AG04449 (cell line): ENCODE measurements at regions of chr2 and their contacts with region 1.

Region 1: GRCh38 chr2:68943581-68944568 is 8.8 kb downstream of the GKN2 start:
- DNase-seq: no peak
- H3K4me3 ChIP-seq: no peak overlapping the region
- CTCF ChIP-seq: peak; percentile 66

Region 2: GRCh38 chr2:68909793-68910674 is 33.8 kb before region 1 on chr2:
- CTCF ChIA-PET with region 1: no interaction called
- POLR2A ChIA-PET with region 1: no interaction called
- DNase-seq: no peak
- H3K4me3 ChIP-seq: no peak overlapping the region
- CTCF ChIP-seq: peak; percentile 80

Region 3: DNA sequence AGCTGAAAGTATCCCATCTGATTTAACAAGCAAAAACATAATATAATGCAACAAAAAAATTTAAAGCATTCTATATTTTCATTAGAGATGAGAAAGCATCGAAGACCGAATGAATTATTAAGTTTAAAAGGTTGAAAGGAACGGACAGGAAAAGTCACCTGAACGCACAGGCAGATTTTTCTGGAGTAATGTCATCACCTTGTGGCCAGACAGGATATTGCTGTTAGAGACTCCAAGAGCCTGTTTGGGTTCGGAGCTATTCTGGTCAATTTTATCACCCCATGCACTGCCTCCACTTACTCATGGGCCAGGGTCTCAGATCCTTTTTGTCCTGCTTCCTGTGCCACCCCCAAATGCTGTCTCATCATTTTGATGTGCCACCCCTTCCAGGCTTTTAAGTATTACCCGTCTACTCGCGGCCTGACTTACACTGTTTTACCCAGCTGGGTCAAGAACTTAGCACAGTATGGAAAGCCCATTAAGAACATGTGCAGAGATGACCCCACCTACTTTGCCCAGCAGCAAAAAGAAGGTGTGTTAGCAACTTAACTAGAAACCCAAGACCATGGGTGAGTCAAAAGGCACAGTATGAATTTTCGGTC is 18.5 kb before region 1 on chr2:
- CTCF ChIA-PET with region 1: interaction called, 27 read pairs
- POLR2A ChIA-PET with region 1: no interaction called
- DNase-seq: no peak
- H3K4me3 ChIP-seq: no peak overlapping the region
- CTCF ChIP-seq: peak; percentile 72

Region 4: DNA sequence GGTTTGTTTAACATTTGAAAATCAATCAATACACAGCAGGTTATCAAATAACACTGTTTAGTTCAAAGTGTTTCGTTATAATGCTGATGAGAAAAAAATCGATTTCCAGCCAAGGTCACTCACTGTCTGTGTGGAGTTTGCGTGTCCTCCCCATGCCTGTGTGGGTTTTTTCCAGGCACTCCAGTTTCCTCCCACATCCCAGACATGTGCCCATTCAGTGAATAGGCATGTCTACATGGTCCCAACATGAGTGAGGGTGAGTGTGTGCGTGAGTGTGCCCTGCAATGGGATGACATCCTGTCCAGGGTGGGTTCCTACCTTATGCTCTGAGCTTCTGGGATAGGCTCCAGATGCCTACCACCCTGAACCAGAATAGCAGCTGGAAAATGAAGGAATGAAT is 17.5 kb after region 1 on chr2:
- CTCF ChIA-PET with region 1: interaction called, 31 read pairs
- POLR2A ChIA-PET with region 1: no interaction called
- DNase-seq: no peak
- H3K4me3 ChIP-seq: no peak overlapping the region
- CTCF ChIP-seq: no peak

Region 5: DNA sequence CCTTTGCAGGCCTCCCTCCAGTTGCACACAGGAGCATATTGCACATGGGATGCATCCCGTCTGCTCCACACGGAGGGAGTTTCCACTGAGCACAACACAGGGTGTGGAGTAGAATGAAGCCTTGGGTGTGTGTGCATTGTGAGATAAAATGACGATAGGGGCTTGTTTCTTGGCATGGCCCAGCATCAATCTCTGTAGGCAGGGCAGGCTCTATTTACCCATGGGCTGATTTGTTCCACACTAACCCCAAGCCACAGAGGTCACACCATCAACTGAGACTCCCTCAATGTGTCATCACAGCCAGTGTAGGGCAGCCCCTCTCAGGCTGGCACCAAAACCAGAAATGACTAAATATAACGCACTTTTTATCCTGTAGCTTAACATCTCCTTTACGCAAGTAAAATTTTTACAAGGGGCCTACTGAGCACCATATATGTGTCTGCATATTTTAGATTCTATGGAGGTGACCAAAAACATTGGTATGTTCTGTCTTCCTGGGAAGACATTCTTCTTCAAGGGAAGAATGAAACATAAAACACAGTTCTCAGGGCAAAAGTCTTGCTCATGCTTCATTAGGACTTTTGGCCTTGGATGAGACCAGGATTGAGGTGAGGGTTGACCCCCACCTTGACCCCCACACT is 27.8 kb after region 1 on chr2:
- CTCF ChIA-PET with region 1: interaction called, 19 read pairs
- POLR2A ChIA-PET with region 1: no interaction called
- DNase-seq: peak; percentile 99
- H3K4me3 ChIP-seq: no peak overlapping the region
- CTCF ChIP-seq: no peak

Region 6: DNA sequence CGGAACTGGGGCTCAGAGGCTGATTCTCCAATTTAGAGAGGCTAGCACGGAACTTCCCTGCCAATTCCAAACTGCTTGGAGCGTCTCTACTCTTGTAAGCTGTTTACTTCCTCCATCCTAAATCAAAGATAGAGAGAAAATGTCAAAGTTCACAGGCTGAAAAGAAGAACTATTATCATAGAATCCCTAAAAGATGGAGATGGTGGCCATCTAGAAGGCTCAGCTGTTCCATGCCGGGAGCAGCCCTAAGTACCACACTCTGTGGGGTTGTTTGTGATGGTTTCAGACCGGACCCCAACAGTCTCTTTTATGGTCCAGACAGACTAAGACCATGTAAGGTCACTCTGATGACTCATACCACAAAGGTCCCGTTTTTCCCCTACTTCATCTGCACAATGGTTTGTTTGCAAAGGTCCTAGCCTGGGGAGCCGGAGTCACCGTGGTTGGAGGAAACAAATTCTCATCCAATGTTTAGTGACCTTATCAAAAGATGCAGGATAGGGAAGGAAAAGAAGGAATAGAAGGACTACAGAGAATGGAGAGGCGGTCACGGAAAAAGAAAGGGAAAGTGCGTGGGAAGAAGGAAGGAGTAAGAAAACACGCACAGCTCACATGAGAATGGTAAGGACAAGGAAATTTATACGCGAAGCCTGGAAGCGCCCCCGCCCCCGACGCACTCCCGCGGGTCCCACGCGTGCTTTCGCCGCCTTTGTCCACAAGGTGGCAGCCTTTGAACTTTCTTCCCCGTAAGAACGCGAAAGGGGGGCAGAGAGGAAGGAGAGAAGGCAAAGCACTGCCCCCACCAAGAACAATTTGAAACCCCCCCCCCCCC is 68.7 kb after region 1 on chr2:
- CTCF ChIA-PET with region 1: interaction called, 21 read pairs
- POLR2A ChIA-PET with region 1: no interaction called
- DNase-seq: no peak
- H3K4me3 ChIP-seq: peak overlapping the region; percentile 98
- CTCF ChIP-seq: peak; percentile 78

Region 7: GRCh38 chr2:69196327-69197117 is 252.6 kb after region 1 on chr2:
- CTCF ChIA-PET with region 1: no interaction called
- POLR2A ChIA-PET with region 1: no interaction called
- DNase-seq: peak; percentile 99
- H3K4me3 ChIP-seq: no peak overlapping the region
- CTCF ChIP-seq: no peak

Region 8: GRCh38 chr2:69306822-69307578 is 363.1 kb after region 1 on chr2:
- CTCF ChIA-PET with region 1: interaction called, 41 read pairs
- POLR2A ChIA-PET with region 1: no interaction called
- DNase-seq: no peak
- H3K4me3 ChIP-seq: peak overlapping the region; percentile 58
- CTCF ChIP-seq: peak; percentile 97

Region 9: DNA sequence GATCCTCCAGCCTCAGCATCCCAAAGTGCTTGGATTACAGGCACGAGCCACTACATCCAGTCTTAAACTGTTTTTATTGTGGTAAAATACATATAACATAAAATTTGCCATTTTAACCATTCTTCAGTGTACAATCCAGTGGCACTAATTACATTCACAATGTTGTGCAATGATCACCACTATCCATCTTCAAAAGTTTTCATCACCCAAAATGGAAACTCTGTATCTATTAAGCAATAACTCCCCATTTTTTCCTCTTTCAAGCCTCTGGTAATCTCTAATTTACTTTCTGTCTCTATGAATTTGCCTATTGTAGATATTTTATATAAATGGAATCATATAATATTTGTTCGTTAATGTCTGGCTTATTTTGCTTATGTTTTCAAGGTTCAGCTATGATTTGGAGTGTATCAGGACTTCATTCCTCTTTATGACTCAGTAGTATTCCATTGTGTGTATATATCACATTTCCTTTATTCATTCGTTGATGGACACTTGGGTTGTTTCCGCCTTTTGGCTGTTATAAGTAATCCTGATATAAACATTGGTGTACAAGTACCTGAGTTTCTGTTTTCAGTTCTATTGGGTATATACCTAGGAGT is 371.4 kb after region 1 on chr2:
- CTCF ChIA-PET with region 1: interaction called, 13 read pairs
- POLR2A ChIA-PET with region 1: no interaction called
- DNase-seq: no peak
- H3K4me3 ChIP-seq: no peak overlapping the region
- CTCF ChIP-seq: no peak